Activated CD4-positive, alpha-beta memory T cell treated with anti-CD3 and anti-CD28 coated beads for 36 hours (primary cell): ENCODE measurements at regions of chr19 and their contacts with region 1.

Region 1: GRCh38 chr19:33373701-33374421 is at the start of gene CEBPG:
- DNase-seq: peak; percentile 66
- H3K4me3 Mint-ChIP-seq: peak within 1 kb of the TSS; percentile 87
- H3K27ac Mint-ChIP-seq: peak within 1 kb of the TSS; percentile 81
- H3K4me1 Mint-ChIP-seq: peaks cover 45% of the 10 kb centered on the region
- H3K27me3 Mint-ChIP-seq: no peaks in the 10 kb centered on the region
- total RNA-seq, gene CEBPG: 30.6 to 30.9 TPM

Region 2: GRCh38 chr19:33302175-33302973 is 71.5 kb before region 1 on chr19 and contains the start of gene CEBPA:
- CTCF ChIA-PET with region 1: interaction called, 11 read pairs
- POLR2A ChIA-PET with region 1: interaction called, 10 read pairs
- intact Hi-C with region 1: loop called (anchors 2 kb)
- DNase-seq: peak; percentile 68
- H3K4me3 Mint-ChIP-seq: peak within 1 kb of the TSS; percentile 54
- H3K27ac Mint-ChIP-seq: no peak within 1 kb of the TSS
- H3K4me1 Mint-ChIP-seq: no peaks in the 10 kb centered on the region
- H3K27me3 Mint-ChIP-seq: peaks cover 29% of the 10 kb centered on the region
- total RNA-seq, gene CEBPA: 0.22 to 0.33 TPM

Region 3: GRCh38 chr19:33406521-33407139 is 32.8 kb after region 1 on chr19:
- CTCF ChIA-PET with region 1: interaction called, 14 read pairs
- POLR2A ChIA-PET with region 1: no interaction called
- intact Hi-C with region 1: no loop called
- DNase-seq: peak; percentile 84
- H3K4me3 Mint-ChIP-seq: no peak overlapping the region
- H3K27ac Mint-ChIP-seq: no peak overlapping the region
- H3K4me1 Mint-ChIP-seq: peaks cover 4% of the 10 kb centered on the region
- H3K27me3 Mint-ChIP-seq: no peaks in the 10 kb centered on the region

Region 4: GRCh38 chr19:33426621-33427361 is 52.9 kb after region 1 on chr19:
- CTCF ChIA-PET with region 1: no interaction called
- POLR2A ChIA-PET with region 1: no interaction called
- intact Hi-C with region 1: no loop called
- DNase-seq: no peak
- H3K4me3 Mint-ChIP-seq: no peak overlapping the region
- H3K27ac Mint-ChIP-seq: no peak overlapping the region
- H3K4me1 Mint-ChIP-seq: peaks cover 6% of the 10 kb centered on the region
- H3K27me3 Mint-ChIP-seq: no peaks in the 10 kb centered on the region

Region 5: DNA sequence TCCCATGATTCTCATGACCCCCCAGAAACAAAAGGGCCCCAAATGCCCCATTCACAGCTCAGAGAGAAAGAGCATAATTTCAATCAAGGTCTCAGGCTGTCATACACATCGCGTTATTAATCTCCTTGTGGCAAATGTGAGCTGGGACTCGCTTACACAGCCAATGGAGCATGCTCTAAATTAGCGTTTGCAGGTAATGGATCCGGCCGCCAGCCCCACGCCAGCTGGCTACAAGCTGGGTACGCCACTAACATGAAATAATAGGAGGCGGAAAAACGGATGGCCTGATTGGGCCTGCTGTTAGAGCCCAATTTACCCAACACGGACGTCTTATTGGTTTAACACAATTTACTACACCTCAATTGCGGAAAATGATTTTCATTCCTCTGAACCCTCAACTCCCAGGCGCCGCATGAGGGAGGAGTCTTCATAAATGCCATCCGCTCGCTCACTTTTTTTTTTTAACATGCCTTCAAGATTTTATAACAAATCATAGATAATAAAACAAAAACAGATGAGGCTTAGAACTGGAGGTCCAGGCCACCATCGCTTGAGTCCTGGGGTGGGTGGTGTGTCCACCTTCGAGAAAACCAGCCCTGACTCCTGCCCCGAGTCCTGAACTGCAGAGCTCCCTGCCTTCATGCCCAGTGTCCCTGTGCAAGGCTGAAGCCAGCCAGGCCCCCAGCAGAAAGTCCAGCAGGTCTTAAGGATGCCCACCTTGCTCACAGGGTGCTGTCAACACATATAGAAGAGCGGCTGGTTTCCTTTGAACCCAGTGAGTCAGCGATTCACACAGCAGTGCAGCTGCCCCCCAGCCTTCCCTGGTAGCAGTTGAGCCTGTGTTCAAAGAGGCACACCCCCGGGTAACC is 85.6 kb after region 1 on chr19:
- CTCF ChIA-PET with region 1: no interaction called
- POLR2A ChIA-PET with region 1: no interaction called
- intact Hi-C with region 1: no loop called
- DNase-seq: no peak
- H3K4me3 Mint-ChIP-seq: no peak overlapping the region
- H3K27ac Mint-ChIP-seq: no peak overlapping the region
- H3K4me1 Mint-ChIP-seq: no peaks in the 10 kb centered on the region
- H3K27me3 Mint-ChIP-seq: no peaks in the 10 kb centered on the region

Region 6: GRCh38 chr19:33514885-33515551 is 141.2 kb after region 1 on chr19:
- CTCF ChIA-PET with region 1: no interaction called
- POLR2A ChIA-PET with region 1: no interaction called
- intact Hi-C with region 1: no loop called
- DNase-seq: peak; percentile 42
- H3K4me3 Mint-ChIP-seq: no peak overlapping the region
- H3K27ac Mint-ChIP-seq: no peak overlapping the region
- H3K4me1 Mint-ChIP-seq: peaks cover 24% of the 10 kb centered on the region
- H3K27me3 Mint-ChIP-seq: no peaks in the 10 kb centered on the region

Region 7: GRCh38 chr19:33795370-33796163 is 421.7 kb after region 1 on chr19:
- CTCF ChIA-PET with region 1: no interaction called
- POLR2A ChIA-PET with region 1: interaction called, 4 read pairs
- intact Hi-C with region 1: loop called (anchors 2 kb)
- DNase-seq: peak; percentile 68
- H3K4me3 Mint-ChIP-seq: peak overlapping the region; percentile 71
- H3K27ac Mint-ChIP-seq: peak overlapping the region; percentile 72
- H3K4me1 Mint-ChIP-seq: peaks cover 2% of the 10 kb centered on the region
- H3K27me3 Mint-ChIP-seq: peaks cover 9% of the 10 kb centered on the region